A549 (cell line): ENCODE measurements at regions of chr3 and their contacts with region 1.

Region 1: GRCh38 chr3:143674100-143674968 is 173.9 kb downstream of the SLC9A9 start:
- DNase-seq: peak; percentile 56 to 75
- ATAC-seq: peak; percentile 84 to 95; a peak in 5 of 6 replicates
- H3K4me3 ChIP-seq: no peak overlapping the region
- H3K27ac ChIP-seq: no peak overlapping the region
- H3K4me1 ChIP-seq: no peaks in the 10 kb centered on the region
- CTCF ChIP-seq: peak; percentile 87
- EP300 ChIP-seq: no peak
- POLR2A ChIP-seq: no peak
- RAD21 ChIP-seq: peak; percentile 76 to 84

Region 2: GRCh38 chr3:143551761-143552160 is 122.6 kb before region 1 on chr3:
- CTCF ChIA-PET with region 1: no interaction called
- POLR2A ChIA-PET with region 1: no interaction called
- DNase-seq: no peak
- ATAC-seq: no peak
- H3K4me3 ChIP-seq: no peak overlapping the region
- H3K27ac ChIP-seq: no peak overlapping the region
- H3K4me1 ChIP-seq: no peaks in the 10 kb centered on the region
- CTCF ChIP-seq: no peak
- EP300 ChIP-seq: no peak
- POLR2A ChIP-seq: no peak
- RAD21 ChIP-seq: no peak

Region 3: GRCh38 chr3:143685491-143685890 is 11.2 kb after region 1 on chr3:
- CTCF ChIA-PET with region 1: interaction called, 16 read pairs
- POLR2A ChIA-PET with region 1: interaction called, 3 read pairs
- DNase-seq: no peak
- ATAC-seq: no peak
- H3K4me3 ChIP-seq: no peak overlapping the region
- H3K27ac ChIP-seq: no peak overlapping the region
- H3K4me1 ChIP-seq: no peaks in the 10 kb centered on the region
- CTCF ChIP-seq: no peak
- EP300 ChIP-seq: no peak
- POLR2A ChIP-seq: no peak
- RAD21 ChIP-seq: no peak